Left cardiac atrium (tissue), 4 donors: ENCODE measurements at regions of chr5 and their contacts with region 1.

Region 1: DNA sequence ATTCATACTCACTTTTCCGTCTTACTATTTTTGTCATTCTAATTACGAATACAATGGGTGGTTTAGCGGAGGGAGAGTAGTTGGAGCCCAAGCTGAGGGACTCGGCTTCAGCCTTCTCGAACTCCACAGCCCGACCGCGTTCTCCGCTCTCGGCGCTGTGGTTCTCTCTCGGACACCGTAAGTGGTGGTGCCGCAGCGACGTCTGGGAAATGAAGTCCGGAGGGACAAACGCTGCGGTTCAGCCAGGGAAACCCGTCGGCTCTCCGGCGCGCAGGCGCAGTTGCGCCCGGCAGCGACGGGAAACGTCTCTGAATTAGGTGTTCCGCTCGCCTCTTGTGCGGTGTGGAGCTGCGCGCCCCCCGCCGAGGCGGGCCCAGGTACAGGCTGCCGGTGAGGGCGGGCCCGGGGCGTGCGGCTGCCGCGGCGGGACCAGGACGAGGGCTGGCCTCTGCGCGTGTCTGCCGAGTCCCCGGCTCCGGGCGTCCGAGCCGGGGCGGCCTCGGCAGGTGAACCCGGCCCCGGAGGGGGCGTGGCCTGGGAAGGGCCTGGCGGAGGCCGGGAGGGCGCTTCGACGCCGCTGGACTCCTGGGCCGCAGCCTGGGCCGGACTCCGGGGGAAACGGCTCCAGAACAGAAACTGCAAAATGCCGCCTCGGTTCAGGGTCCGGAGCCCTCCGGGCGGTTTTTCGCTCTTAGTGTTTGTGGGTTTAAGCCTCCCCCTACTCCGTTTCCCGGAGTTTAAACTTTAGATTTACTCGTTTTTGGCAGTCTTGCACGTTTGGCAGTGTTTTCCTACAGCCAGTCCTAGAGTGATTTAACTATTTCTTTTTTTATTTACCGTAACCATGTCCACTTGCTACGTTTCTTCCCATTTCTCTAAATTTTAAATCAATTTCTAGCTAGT is at the start of gene ZNF879:
- DNase-seq: peak; percentile 96
- ATAC-seq: peak; percentile 99 to 100
- total RNA-seq, gene ZNF879: 4.7 to 4.8 TPM

Region 2: GRCh38 chr5:178940569-178941360 is 83.0 kb before region 1 on chr5 and contains the start of gene ZNF454:
- intact Hi-C with region 1: loop called in 1 of 2 experiments (anchors 5 kb)
- DNase-seq: peak; percentile 95
- ATAC-seq: peak; percentile 99
- total RNA-seq, gene ZNF454: 2.0 to 2.2 TPM

Region 3: GRCh38 chr5:179176571-179177230 is 152.9 kb after region 1 on chr5:
- intact Hi-C with region 1: no loop called
- DNase-seq: no peak
- ATAC-seq: no peak